Breast epithelium (tissue), 4 donors: ENCODE measurements at regions of chr1 and their contacts with region 1.

Region 1: GRCh38 chr1:30179942-30180543 is 543.3 kb downstream of the MATN1 start:
- DNase-seq: peak in 1 of 2 donors; percentile 11
- H3K4me3 ChIP-seq: no peak overlapping the region
- H3K27ac ChIP-seq: no peak overlapping the region
- H3K4me1 ChIP-seq: no peaks in the 10 kb centered on the region
- H3K27me3 ChIP-seq: no peaks in the 10 kb centered on the region
- CTCF ChIP-seq: no peak
- POLR2A ChIP-seq: no peak

Region 2: DNA sequence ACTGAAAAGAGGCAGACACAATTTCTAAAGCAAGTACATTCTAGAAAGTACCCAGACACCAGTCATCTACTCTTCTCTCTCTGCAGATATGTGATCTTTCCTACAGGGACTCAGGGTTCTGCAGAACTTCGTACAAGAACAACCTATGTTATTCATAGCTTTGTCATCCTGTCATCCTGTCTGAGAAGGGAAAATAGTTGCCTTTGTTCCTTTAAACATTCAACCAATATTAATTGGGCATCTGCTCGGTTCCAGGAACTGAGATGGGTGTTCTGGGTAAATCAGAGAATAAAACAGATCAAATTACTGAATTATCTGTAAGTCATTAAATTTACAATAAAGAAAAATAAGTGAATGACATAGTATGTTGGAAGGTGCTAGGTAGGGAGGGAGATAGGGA is 38.4 kb after region 1 on chr1:
- intact Hi-C with region 1: no loop called
- DNase-seq: no peak
- H3K4me3 ChIP-seq: no peak overlapping the region
- H3K27ac ChIP-seq: no peak overlapping the region
- H3K4me1 ChIP-seq: no peaks in the 10 kb centered on the region
- H3K27me3 ChIP-seq: no peaks in the 10 kb centered on the region
- CTCF ChIP-seq: no peak
- POLR2A ChIP-seq: no peak

Region 3: DNA sequence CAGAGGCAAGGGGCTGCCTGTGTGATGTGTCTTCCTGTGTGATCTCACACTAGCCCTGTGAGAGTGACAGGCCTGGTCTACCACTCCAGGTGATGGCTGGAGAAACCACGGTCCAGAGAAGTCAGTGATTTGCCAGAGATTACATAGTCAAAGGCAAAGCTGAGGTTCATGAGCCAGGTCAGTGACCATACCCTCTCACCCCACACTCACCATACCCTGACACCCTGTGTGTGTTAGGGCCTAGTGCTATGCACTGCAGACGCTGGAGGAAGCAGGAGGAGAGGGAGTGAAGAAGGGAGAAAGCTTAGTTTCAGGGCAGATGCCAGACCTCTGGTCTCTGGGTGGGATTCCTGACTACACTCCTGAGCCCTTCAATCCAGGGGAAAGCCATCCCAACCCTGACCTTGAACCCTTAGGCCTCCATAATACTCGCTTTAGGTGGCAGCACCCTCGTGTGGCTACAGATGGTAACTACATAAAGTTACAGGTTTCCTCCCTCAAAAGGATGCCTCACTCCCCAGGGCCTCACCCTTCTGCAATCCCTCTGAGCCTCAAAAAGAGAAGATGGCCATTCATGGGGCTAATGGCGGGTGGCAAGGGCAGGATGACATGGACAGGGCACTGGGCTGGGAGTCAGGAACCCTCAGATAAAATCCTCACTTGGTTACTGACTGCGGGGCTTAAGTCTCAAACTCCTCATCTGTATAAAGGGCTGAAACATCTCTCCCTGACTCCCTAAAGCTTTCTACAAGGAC is 749.3 kb after region 1 on chr1:
- intact Hi-C with region 1: loop called (anchors 10 kb)
- DNase-seq: no peak
- H3K4me3 ChIP-seq: no peak overlapping the region
- H3K27ac ChIP-seq: peak overlapping the region; percentile 60 to 77
- H3K4me1 ChIP-seq: no peaks in the 10 kb centered on the region
- H3K27me3 ChIP-seq: no peaks in the 10 kb centered on the region
- CTCF ChIP-seq: peak; percentile 21 to 65 (median 65)
- POLR2A ChIP-seq: no peak

Region 4: DNA sequence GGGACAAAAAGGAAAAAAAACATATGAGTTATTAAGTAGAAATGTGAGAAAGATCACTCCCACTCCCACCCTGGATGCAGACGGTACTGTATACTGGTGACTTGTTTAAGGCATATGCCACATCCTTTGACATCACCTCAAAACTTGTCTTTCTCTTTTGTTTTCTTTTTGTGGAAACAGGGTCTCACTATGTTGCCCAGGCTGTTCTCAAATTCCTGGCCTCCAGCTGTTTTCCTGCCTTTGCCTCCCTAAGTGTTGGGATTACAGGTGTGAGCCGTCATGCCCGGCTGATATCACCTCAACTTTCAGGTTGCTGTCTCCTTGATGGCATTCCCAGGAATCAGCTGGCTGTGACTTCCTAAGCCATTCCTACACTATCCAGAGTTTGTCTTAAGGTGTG is 1815.2 kb after region 1 on chr1:
- intact Hi-C with region 1: no loop called
- DNase-seq: no peak
- H3K4me3 ChIP-seq: no peak overlapping the region
- H3K27ac ChIP-seq: no peak overlapping the region
- H3K4me1 ChIP-seq: no peaks in the 10 kb centered on the region
- H3K27me3 ChIP-seq: no peaks in the 10 kb centered on the region
- CTCF ChIP-seq: no peak
- POLR2A ChIP-seq: no peak